ENCODE measurements at regions of chr1 and their contacts with region 1.

Region 1: DNA sequence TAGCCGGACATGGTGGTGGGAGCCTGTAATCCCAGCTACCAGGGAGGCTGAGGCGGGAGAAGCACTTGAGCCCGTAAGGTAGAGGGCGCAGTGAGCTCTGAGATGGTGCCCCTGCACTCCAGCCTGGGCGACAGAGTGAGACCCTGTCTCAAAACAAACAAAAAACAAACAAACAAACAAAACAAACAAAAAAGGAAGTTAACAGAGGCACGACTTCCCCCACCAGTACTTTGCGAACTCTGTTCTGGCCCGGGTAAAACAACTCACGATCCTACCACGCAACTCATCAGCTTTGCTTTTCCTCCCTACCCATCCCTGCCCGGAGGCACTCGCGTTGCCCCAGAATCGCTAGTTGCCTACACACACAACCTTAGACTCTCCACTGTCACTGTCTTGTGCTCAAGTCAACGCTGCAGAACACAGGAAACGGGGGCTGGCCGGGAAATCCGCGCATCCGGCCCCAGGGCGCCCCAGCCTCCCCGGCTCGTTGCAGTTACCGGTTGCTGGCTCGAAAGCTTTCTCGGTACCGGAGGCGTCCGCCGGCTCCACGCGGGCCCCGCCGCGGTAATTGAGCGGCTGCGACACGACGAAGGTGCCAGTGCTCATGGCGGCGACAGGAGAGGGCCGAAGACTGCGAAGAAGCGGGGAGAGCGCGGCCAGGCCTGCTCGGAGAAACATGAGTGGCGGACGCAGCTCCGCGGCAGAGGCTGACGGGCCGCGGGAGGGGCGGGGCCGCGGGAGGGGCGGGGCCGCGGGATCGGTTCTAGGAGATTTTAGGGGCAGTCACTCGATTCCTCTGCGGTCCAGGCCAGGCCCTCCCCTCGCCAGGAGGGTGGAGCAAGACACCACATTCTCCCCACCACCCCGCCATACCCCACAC is at the start of gene ALDH9A1:
- DNase-seq: peak; percentile 32
- ATAC-seq: peak; percentile 94
- H3K4me3 ChIP-seq: peak within 1 kb of the TSS; percentile 83 to 96 (median 85)
- H3K27ac ChIP-seq: peak within 1 kb of the TSS; percentile 82
- H3K4me1 ChIP-seq: peaks cover 57% of the 10 kb centered on the region
- H3K27me3 ChIP-seq: no peaks in the 10 kb centered on the region; a peak in 2 of 5 replicates
- CTCF ChIP-seq: peak; percentile 74
- EP300 ChIP-seq: no peak
- POLR2A ChIP-seq: peak in 1 of 2 experiments; percentile 78; a peak in 2 of 4 replicates
- RAD21 ChIP-seq: no peak
- total RNA-seq, gene ALDH9A1: 38.5 and 52.7 TPM in 2 replicates

Region 2: DNA sequence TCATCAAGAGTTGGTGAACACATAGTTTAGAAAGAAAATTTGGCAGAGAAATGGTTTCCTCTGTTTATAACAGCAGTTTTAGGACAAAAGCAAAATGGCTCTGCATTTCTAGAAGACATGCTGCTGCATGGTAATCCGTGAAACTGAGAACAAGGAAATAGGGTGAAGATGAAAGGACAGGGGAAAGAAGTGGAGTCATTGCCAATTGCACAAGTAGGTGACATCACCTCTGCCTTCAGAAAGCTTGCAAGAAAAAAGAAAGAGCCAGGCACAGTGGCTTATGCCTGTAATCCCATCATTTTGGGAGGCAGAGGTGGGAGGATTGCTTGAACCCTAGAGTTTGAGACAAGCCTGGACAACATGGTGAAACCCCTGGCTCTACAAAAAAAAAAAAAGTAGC is 559.2 kb before region 1 on chr1:
- CTCF ChIA-PET with region 1: no interaction called
- POLR2A ChIA-PET with region 1: no interaction called
- in situ Hi-C with region 1: no loop called
- intact Hi-C with region 1: loop called (anchors 5 kb)
- DNase-seq: no peak
- ATAC-seq: no peak
- H3K4me3 ChIP-seq: no peak overlapping the region
- H3K27ac ChIP-seq: no peak overlapping the region
- H3K4me1 ChIP-seq: peaks cover 38% of the 10 kb centered on the region
- H3K27me3 ChIP-seq: no peaks in the 10 kb centered on the region
- CTCF ChIP-seq: no peak
- EP300 ChIP-seq: no peak
- POLR2A ChIP-seq: no peak
- RAD21 ChIP-seq: no peak

Region 3: GRCh38 chr1:165630629-165631341 is 67.3 kb before region 1 on chr1 and contains the start of gene MGST3:
- CTCF ChIA-PET with region 1: no interaction called
- POLR2A ChIA-PET with region 1: interaction called, 3 read pairs
- in situ Hi-C with region 1: no loop called
- intact Hi-C with region 1: loop called (anchors 1 kb)
- DNase-seq: peak; percentile 91
- ATAC-seq: peak; percentile 94
- H3K4me3 ChIP-seq: peak within 1 kb of the TSS; percentile 69 to 85 (median 82)
- H3K27ac ChIP-seq: peak within 1 kb of the TSS; percentile 87
- H3K4me1 ChIP-seq: peaks cover 36% of the 10 kb centered on the region
- H3K27me3 ChIP-seq: peaks cover 0 to 4% of the 10 kb centered on the region in 2 experiments; a peak in 1 of 5 replicates
- CTCF ChIP-seq: no peak
- EP300 ChIP-seq: no peak
- POLR2A ChIP-seq: peak; percentile 74 to 91
- RAD21 ChIP-seq: no peak
- total RNA-seq, gene MGST3: 34.3 and 59.7 TPM in 2 replicates

Region 4: GRCh38 chr1:165666152-165666825 is 31.8 kb before region 1 on chr1:
- CTCF ChIA-PET with region 1: no interaction called
- POLR2A ChIA-PET with region 1: no interaction called
- in situ Hi-C with region 1: no loop called
- intact Hi-C with region 1: no loop called
- DNase-seq: no peak
- ATAC-seq: no peak
- H3K4me3 ChIP-seq: no peak overlapping the region
- H3K27ac ChIP-seq: no peak overlapping the region
- H3K4me1 ChIP-seq: no peaks in the 10 kb centered on the region
- H3K27me3 ChIP-seq: no peaks in the 10 kb centered on the region
- CTCF ChIP-seq: no peak
- EP300 ChIP-seq: no peak
- POLR2A ChIP-seq: no peak
- RAD21 ChIP-seq: no peak